ENCODE measurements at regions of chr18 and their contacts with region 1.

Region 1: DNA sequence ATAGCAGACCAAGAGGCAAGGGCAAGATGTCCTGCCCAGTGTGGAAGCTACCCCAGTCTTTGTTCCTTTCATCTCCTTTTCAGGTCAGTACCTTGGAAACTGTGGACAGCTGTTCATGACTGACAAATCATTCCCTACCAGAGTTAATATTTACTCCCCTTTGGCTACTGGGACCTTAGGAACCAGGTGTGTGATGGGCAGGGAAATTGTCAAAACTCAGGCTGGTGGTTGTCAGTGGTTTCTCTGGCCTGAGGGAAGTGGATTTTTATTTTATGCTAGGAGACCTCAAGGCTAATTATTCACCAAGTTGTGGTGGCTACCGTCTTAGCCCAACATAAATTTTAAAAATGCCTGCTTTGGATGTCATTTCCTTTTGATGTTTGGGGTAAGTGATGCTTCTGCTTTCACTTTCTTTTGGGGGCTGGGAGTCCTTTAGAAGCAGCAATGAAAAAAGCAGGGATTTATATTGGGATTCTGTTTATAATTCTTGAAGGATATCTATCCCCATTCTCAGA is 119.3 kb downstream of the SETBP1 start:
- DNase-seq: no peak
- H3K4me3 Mint-ChIP-seq: no peak overlapping the region
- H3K27ac Mint-ChIP-seq: peak overlapping the region; percentile 88
- H3K4me1 Mint-ChIP-seq: peaks cover 94% of the 10 kb centered on the region
- H3K27me3 Mint-ChIP-seq: peaks cover 7% of the 10 kb centered on the region

Region 2: DNA sequence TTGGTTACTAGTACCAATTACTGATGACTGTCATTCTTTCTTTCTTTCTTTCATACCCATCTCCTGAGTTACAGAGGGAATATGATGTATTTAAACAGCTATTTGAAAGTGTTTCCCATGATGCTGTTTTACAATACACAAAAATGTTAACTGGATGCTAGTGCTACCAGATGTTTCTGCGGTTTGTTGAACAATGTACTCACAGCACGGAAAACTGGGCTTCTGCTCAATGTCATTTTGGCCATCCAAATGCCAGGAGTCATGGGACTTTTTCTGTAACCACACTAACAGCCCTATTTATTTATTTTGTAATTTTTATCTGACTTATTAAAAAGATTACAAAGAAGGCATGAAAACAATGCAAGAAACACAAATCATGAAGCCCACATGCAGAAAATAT is 1998.3 kb before region 1 on chr18:
- intact Hi-C with region 1: no loop called
- DNase-seq: no peak
- H3K4me3 Mint-ChIP-seq: no peak overlapping the region
- H3K27ac Mint-ChIP-seq: no peak overlapping the region
- H3K4me1 Mint-ChIP-seq: no peaks in the 10 kb centered on the region
- H3K27me3 Mint-ChIP-seq: no peaks in the 10 kb centered on the region

Region 3: GRCh38 chr18:44758861-44759631 is 40.9 kb before region 1 on chr18:
- intact Hi-C with region 1: loop called (anchors 1 kb)
- DNase-seq: peak; percentile 14
- H3K4me3 Mint-ChIP-seq: peak overlapping the region; percentile 75
- H3K27ac Mint-ChIP-seq: peak overlapping the region; percentile 98
- H3K4me1 Mint-ChIP-seq: peaks cover 51% of the 10 kb centered on the region
- H3K27me3 Mint-ChIP-seq: peaks cover 5% of the 10 kb centered on the region

Region 4: DNA sequence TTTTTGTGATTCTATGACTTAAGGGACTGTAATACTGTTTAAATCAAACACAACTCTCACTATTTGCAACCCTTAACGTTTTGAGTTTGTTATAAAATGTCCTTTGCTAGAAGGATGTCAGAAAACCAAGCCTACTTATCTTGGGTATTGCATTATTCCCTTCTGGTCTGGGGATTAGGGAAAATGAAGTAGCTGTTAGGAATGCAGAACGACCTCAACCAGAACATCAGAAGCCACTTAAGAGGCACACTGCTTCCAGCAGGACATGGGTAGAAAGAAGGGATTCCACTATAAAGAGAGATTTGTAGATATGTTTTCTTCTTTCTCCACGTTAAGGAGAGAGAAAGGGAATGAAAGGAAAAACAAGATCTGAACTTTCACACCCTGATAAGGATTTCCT is 18.1 kb before region 1 on chr18:
- intact Hi-C with region 1: no loop called
- DNase-seq: no peak
- H3K4me3 Mint-ChIP-seq: no peak overlapping the region
- H3K27ac Mint-ChIP-seq: no peak overlapping the region
- H3K4me1 Mint-ChIP-seq: peaks cover 41% of the 10 kb centered on the region
- H3K27me3 Mint-ChIP-seq: peaks cover 20% of the 10 kb centered on the region

Region 5: DNA sequence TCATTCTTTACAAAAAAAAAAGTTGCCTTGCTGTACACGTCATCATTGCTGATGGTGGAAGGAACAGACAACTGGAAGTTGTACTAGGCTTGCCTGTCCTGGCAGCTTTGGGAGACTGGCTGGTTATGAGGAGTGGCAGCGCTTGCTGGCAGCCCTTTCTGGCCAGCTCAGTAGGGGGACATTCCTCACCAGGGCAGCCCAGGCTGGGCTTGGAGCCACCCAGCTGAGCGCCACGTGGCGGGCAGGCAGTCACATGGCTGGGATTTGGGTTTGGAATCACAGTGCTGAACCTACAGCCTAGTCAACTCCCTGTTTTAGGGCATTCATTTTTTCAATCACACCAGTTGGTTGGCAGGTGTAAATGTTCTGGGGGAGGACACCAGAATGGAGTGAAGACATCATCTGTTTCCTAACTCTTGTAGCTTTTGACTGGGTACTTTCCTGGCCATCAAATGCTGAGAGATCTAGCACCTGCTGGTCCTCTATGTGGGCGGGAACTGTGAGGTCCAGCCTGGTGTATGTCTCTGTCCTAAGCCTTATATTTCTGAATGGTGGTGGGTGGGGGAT is 20.1 kb after region 1 on chr18:
- intact Hi-C with region 1: loop called (anchors 2 kb)
- DNase-seq: no peak
- H3K4me3 Mint-ChIP-seq: no peak overlapping the region
- H3K27ac Mint-ChIP-seq: no peak overlapping the region
- H3K4me1 Mint-ChIP-seq: peaks cover 19% of the 10 kb centered on the region
- H3K27me3 Mint-ChIP-seq: peaks cover 14% of the 10 kb centered on the region

Region 6: DNA sequence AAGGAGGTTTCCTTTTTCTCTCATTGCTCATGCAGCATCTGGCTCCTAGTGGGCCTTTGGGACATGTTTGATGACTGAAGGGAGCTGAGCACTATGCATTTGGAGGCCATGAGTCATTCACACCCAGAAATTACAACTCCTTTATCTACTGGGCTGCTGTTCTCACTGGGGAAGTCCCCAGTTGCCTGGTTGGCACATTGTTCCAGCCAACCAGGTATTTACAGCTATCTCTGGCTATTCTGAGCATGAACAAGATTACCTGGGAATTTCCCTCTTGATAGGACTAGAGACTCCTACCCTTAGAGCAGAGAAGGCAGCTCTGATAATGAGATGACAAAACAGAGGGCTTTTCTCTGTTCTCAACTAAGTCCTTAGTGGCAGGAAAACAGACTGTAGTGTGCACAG is 87.3 kb after region 1 on chr18:
- intact Hi-C with region 1: loop called (anchors 1 kb)
- DNase-seq: peak; percentile 45
- H3K4me3 Mint-ChIP-seq: peak overlapping the region; percentile 71
- H3K27ac Mint-ChIP-seq: peak overlapping the region; percentile 99
- H3K4me1 Mint-ChIP-seq: peaks cover 31% of the 10 kb centered on the region
- H3K27me3 Mint-ChIP-seq: no peaks in the 10 kb centered on the region